H1 (cell line): ENCODE measurements at regions of chr2 and their contacts with region 1.

Region 1: GRCh38 chr2:36355151-36355889 is at the start of gene CRIM1:
- DNase-seq: peak; percentile 67 to 84
- H3K4me3 ChIP-seq: peak within 1 kb of the TSS; percentile 80 to 93 (median 84)
- H3K27ac ChIP-seq: peak within 1 kb of the TSS; percentile 53; the same call in 1 of the 2 replicates
- H3K4me1 ChIP-seq: peaks cover 3 to 18% (median 16%) of the 10 kb centered on the region in 4 experiments; a peak in 4 of 7 replicates
- H3K27me3 ChIP-seq: peaks cover 0 to 6% (median 0%) of the 10 kb centered on the region in 4 experiments; a peak in 2 of 7 replicates
- CTCF ChIP-seq: no peak
- EP300 ChIP-seq: no peak
- POLR2A ChIP-seq: peak; percentile 72 to 85
- RAD21 ChIP-seq: no peak
- total RNA-seq, gene CRIM1: 27.4 and 28.4 TPM in 2 replicates

Region 2: DNA sequence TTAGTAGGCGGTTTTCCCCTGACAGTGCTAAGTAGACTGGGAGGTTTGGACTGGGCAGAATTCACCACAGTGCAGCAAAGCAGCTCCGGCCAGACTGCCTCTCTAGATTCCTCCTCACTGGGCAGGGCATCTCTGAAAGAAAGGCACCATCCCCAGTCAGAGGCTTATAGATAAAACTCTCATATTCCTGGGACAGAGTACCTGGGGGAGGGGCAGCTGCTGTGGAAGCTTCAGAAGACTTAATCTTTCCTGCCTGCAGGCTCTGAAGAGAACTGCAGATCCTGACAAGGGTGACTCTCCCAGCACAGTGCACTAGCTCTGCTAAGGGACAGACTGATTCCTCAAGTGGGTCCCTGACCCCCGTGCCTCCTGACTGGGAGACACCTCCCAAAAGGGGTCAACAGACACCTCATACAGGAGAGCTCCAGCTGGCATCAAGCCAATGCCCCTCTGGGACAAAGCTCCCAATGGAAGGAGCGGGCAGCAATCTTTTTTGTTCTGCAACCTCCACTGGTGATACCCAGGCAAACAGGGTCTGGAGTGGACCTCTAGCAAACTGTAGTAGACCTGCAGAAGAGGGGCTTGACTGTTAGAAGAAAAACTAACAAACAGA is 266.5 kb before region 1 on chr2:
- CTCF ChIA-PET with region 1: no interaction called
- POLR2A ChIA-PET with region 1: no interaction called
- DNase-seq: no peak
- H3K4me3 ChIP-seq: no peak overlapping the region
- H3K27ac ChIP-seq: no peak overlapping the region
- H3K4me1 ChIP-seq: no peaks in the 10 kb centered on the region
- H3K27me3 ChIP-seq: no peaks in the 10 kb centered on the region
- CTCF ChIP-seq: no peak
- EP300 ChIP-seq: no peak
- POLR2A ChIP-seq: no peak
- RAD21 ChIP-seq: no peak

Region 3: GRCh38 chr2:36367895-36368353 is 12.6 kb after region 1 on chr2:
- CTCF ChIA-PET with region 1: interaction called, 12 read pairs
- POLR2A ChIA-PET with region 1: interaction called, 16 read pairs
- DNase-seq: no peak
- H3K4me3 ChIP-seq: peak overlapping the region in 1 of 4 experiments; percentile 11; a peak in 1 of 8 replicates
- H3K27ac ChIP-seq: peak overlapping the region; percentile 41; the same call in 1 of the 2 replicates
- H3K4me1 ChIP-seq: peaks cover 14 to 48% (median 45%) of the 10 kb centered on the region in 4 experiments
- H3K27me3 ChIP-seq: no peaks in the 10 kb centered on the region
- CTCF ChIP-seq: peak in 1 of 3 experiments; percentile 1; a peak in 1 of 4 replicates
- EP300 ChIP-seq: no peak
- POLR2A ChIP-seq: no peak; a peak in 1 of 3 replicates
- RAD21 ChIP-seq: no peak

Region 4: DNA sequence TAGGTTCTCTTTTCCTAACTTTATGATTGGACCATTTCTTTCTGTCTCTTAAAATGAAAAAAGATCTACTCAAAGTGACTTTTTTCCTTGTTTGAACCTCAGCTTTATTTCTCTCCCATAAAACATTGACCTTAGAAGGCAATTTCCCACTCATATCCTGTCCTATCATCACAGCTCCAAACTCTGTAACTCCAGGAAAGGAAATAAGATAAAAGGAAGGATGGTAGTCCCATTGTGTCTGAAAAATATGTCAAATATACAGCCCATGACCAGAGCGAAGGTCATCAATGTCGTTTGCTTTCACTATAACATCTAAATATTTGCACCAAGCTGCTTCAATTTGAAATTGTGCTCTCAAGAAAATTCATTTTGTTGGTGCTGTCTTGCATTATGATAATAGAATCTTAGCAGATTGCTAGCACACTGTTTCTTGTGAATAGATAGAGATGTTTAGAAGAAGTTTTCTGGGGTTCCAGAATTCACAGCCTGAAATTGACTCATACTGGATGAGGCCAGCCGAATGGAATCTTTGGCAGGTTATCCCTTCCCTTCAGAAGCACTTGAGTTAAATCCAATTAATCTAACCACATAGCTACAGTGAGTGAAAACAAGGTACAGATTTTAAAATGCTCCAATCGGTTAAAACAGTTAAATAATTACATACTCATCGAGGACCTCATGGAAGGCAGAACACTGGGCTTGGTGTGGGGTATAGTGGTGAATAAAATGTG is 95.3 kb after region 1 on chr2:
- CTCF ChIA-PET with region 1: interaction called, 99 read pairs
- POLR2A ChIA-PET with region 1: interaction called, 3 read pairs
- DNase-seq: no peak
- H3K4me3 ChIP-seq: no peak overlapping the region
- H3K27ac ChIP-seq: no peak overlapping the region
- H3K4me1 ChIP-seq: peaks cover 0 to 7% (median 3%) of the 10 kb centered on the region in 4 experiments; a peak in 2 of 7 replicates
- H3K27me3 ChIP-seq: no peaks in the 10 kb centered on the region
- CTCF ChIP-seq: no peak
- EP300 ChIP-seq: no peak
- POLR2A ChIP-seq: no peak
- RAD21 ChIP-seq: no peak

Region 5: GRCh38 chr2:36507408-36507812 is 152.1 kb after region 1 on chr2:
- CTCF ChIA-PET with region 1: interaction called, 27 read pairs
- POLR2A ChIA-PET with region 1: interaction called, 5 read pairs
- DNase-seq: peak in 1 of 2 experiments; percentile 70
- H3K4me3 ChIP-seq: no peak overlapping the region
- H3K27ac ChIP-seq: no peak overlapping the region
- H3K4me1 ChIP-seq: peaks cover 0 to 4% (median 0%) of the 10 kb centered on the region in 4 experiments; a peak in 1 of 7 replicates
- H3K27me3 ChIP-seq: no peaks in the 10 kb centered on the region
- CTCF ChIP-seq: peak; percentile 47 to 94 (median 81)
- EP300 ChIP-seq: no peak
- POLR2A ChIP-seq: no peak
- RAD21 ChIP-seq: peak; percentile 93 to 94